ENCODE measurements at regions of chr13 and their contacts with region 1.

Region 1: DNA sequence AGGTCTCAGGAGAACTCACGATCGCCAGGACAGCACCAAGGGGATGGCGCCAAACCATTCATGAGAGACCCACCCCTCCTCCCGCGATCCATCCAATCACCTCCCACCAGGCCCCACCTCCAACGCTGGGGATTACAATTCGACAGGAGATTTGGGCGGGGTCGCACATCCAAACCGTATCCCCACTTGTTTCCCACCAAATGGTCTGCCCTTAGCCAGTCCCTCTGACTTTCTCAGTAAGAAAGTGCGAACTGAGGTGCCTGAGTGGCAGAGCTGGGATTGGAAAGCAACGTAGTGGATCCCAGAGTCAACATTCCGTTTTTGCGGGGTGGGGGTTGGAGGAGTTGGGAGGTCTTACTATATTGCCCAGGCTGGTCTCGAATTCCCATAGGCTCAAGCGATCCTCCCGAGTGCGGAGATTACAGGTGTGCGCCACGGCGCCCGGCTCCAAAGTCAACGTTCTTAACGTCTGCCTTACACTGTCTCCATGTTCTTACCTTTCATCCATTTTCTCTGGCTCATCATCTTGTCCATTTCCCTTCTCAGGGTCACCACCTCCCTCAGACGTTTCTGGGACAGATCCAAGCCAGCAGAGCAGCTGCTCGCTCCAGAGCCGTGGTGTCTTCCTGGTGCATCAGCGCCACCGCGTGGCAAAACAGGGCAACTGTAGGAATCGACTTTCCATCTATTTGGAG is 102.7 kb upstream of the ABCC4 start:
- DNase-seq: peak; percentile 79
- ATAC-seq: peak; percentile 92
- H3K4me3 Mint-ChIP-seq: peak overlapping the region; percentile 85
- H3K27ac Mint-ChIP-seq: peak overlapping the region; percentile 76
- H3K4me1 Mint-ChIP-seq: peaks cover 12% of the 10 kb centered on the region
- H3K27me3 Mint-ChIP-seq: peaks cover 7% of the 10 kb centered on the region

Region 2: GRCh38 chr13:95181586-95181985 is 222.4 kb before region 1 on chr13:
- CTCF ChIA-PET with region 1: interaction called, 17 read pairs
- POLR2A ChIA-PET with region 1: no interaction called
- DNase-seq: no peak
- ATAC-seq: no peak
- H3K4me3 Mint-ChIP-seq: no peak overlapping the region
- H3K27ac Mint-ChIP-seq: no peak overlapping the region
- H3K4me1 Mint-ChIP-seq: peaks cover 57% of the 10 kb centered on the region
- H3K27me3 Mint-ChIP-seq: no peaks in the 10 kb centered on the region

Region 3: GRCh38 chr13:95226932-95227695 is 176.9 kb before region 1 on chr13:
- CTCF ChIA-PET with region 1: interaction called, 11 read pairs
- POLR2A ChIA-PET with region 1: no interaction called
- DNase-seq: no peak
- ATAC-seq: no peak
- H3K4me3 Mint-ChIP-seq: no peak overlapping the region
- H3K27ac Mint-ChIP-seq: no peak overlapping the region
- H3K4me1 Mint-ChIP-seq: peaks cover 15% of the 10 kb centered on the region
- H3K27me3 Mint-ChIP-seq: no peaks in the 10 kb centered on the region

Region 4: DNA sequence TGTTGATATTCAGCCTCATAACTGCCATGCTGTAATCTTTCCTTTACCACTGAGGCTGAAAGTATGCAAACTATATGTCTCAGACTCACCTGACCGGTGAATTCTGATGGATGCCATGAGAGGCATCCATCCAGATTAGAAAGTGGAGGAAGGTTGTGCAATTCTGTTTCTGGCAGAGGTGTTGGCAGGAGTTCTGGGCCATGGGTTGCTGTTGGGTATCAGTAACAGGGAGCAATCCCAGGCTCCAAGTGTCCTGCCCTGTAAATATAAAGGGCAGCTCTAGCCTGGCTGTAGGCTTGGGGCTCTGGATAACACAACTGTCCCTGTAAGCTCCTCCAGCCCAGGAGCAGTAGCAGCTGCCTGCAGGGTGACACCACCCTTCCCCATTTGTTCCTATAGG is 25.4 kb before region 1 on chr13:
- CTCF ChIA-PET with region 1: interaction called, 29 read pairs
- POLR2A ChIA-PET with region 1: no interaction called
- DNase-seq: no peak
- ATAC-seq: no peak
- H3K4me3 Mint-ChIP-seq: no peak overlapping the region
- H3K27ac Mint-ChIP-seq: no peak overlapping the region
- H3K4me1 Mint-ChIP-seq: peaks cover 4% of the 10 kb centered on the region
- H3K27me3 Mint-ChIP-seq: peaks cover 8% of the 10 kb centered on the region

Region 5: GRCh38 chr13:95420501-95420900 is 16.5 kb after region 1 on chr13:
- CTCF ChIA-PET with region 1: interaction called, 21 read pairs
- POLR2A ChIA-PET with region 1: no interaction called
- DNase-seq: no peak
- ATAC-seq: no peak
- H3K4me3 Mint-ChIP-seq: no peak overlapping the region
- H3K27ac Mint-ChIP-seq: no peak overlapping the region
- H3K4me1 Mint-ChIP-seq: no peaks in the 10 kb centered on the region
- H3K27me3 Mint-ChIP-seq: peaks cover 4% of the 10 kb centered on the region

Region 6: GRCh38 chr13:95457294-95457693 is 53.3 kb after region 1 on chr13:
- CTCF ChIA-PET with region 1: no interaction called
- POLR2A ChIA-PET with region 1: no interaction called
- DNase-seq: no peak
- ATAC-seq: peak; percentile 65
- H3K4me3 Mint-ChIP-seq: no peak overlapping the region
- H3K27ac Mint-ChIP-seq: no peak overlapping the region
- H3K4me1 Mint-ChIP-seq: peaks cover 13% of the 10 kb centered on the region
- H3K27me3 Mint-ChIP-seq: peaks cover 3% of the 10 kb centered on the region

Region 7: GRCh38 chr13:95644601-95645052 is 240.7 kb after region 1 on chr13 and contains the start of gene DZIP1:
- CTCF ChIA-PET with region 1: no interaction called
- POLR2A ChIA-PET with region 1: no interaction called
- DNase-seq: peak; percentile 51
- ATAC-seq: peak; percentile 90
- H3K4me3 Mint-ChIP-seq: peak within 1 kb of the TSS; percentile 70
- H3K27ac Mint-ChIP-seq: no peak within 1 kb of the TSS
- H3K4me1 Mint-ChIP-seq: peaks cover 10% of the 10 kb centered on the region
- H3K27me3 Mint-ChIP-seq: peaks cover 32% of the 10 kb centered on the region
- total RNA-seq, gene DZIP1: 0.26 to 0.34 TPM

Measured in activated CD8-positive, alpha-beta T cell treated with anti-CD3 and anti-CD28 coated beads, Interleukin-2, amount 10 ng/mL, durations not matched to agents 7 days and 5 days (primary cell).